Mammary epithelial cell (primary cell): ENCODE measurements at regions of chr11 and their contacts with region 1.

Region 1: DNA sequence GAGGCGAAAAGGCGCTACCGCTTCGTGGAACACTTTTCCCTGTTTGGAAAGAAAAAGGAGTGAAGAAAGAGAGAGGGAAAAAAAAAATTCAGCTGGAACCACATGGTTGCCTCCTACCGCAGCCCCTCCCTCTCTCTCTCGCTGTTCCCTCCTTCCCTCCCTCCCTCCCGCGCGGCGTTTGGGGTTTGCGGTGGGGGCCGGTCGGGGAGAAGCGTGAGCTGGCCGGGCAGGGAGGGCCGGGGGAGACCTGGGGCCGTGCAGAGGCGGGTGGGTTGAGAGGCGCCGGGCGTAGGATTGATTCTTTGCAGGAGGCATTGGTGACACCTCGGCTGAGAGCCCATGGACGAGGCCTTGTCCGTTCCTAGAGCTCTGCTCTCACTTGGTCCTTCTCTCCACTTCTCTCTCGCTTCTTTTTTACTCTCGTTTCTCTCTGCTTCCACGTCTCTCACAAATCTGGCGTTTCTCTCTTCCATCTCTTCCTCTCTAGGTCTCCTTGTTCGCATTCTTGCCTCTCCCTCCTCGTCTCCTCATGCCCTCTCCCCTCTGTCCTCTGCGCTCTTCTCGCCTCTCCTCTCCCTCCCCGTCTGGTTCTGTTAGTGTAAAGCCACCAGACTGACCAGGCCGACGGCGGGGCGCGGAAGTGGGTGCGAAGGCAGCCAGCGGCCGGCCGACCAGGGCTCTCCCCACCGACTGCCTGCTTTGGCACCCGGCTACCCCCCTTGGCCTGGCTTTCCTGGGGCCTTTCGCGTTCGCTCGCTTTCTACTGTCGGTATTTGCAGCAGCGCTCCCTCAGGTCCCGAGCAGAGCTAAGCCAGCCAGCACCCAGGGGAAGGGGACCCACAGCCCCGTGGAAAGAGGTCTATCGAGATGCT is at the start of gene CLMP:
- DNase-seq: peak; percentile 58
- H3K4me3 ChIP-seq: peak within 1 kb of the TSS; percentile 47 to 88 (median 87)
- H3K27ac ChIP-seq: peak within 1 kb of the TSS; percentile 77
- H3K4me1 ChIP-seq: peaks cover 52% of the 10 kb centered on the region
- H3K27me3 ChIP-seq: no peaks in the 10 kb centered on the region
- CTCF ChIP-seq: no peak
- total RNA-seq, gene CLMP: 110 to 175 TPM

Region 2: GRCh38 chr11:122808478-122808869 is 386.9 kb before region 1 on chr11:
- CTCF ChIA-PET with region 1: no interaction called
- dilution Hi-C with region 1: no loop called
- in situ Hi-C with region 1: no loop called
- intact Hi-C with region 1: loop called (anchors 10 kb)
- DNase-seq: peak; percentile 71
- H3K4me3 ChIP-seq: no peak overlapping the region
- H3K27ac ChIP-seq: peak overlapping the region; percentile 59
- H3K4me1 ChIP-seq: peaks cover 50% of the 10 kb centered on the region
- H3K27me3 ChIP-seq: no peaks in the 10 kb centered on the region
- CTCF ChIP-seq: no peak

Region 3: DNA sequence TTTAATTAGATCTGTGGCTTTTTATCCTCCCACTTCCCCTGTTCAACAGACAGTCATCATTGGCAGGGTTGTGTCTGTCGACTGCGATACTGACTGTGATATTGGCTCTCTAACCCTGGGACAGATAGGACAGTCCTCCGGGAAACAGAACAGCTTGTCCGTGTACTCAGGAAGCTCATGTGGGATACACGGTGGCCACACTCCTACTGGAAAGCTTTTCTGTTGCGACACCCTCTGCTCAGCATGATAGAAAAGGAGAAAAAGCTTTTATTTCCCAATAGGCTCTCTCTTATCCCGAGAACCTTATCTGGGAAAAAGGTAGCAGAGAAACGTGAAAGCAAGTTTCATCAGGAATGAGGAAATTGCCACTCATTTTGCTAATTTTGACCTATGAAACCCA is 73.1 kb before region 1 on chr11:
- CTCF ChIA-PET with region 1: no interaction called
- dilution Hi-C with region 1: no loop called
- in situ Hi-C with region 1: no loop called
- intact Hi-C with region 1: loop called (anchors 2 kb)
- DNase-seq: peak; percentile 43
- H3K4me3 ChIP-seq: no peak overlapping the region
- H3K27ac ChIP-seq: peak overlapping the region; percentile 56
- H3K4me1 ChIP-seq: peaks cover 22% of the 10 kb centered on the region
- H3K27me3 ChIP-seq: no peaks in the 10 kb centered on the region
- CTCF ChIP-seq: no peak

Region 4: DNA sequence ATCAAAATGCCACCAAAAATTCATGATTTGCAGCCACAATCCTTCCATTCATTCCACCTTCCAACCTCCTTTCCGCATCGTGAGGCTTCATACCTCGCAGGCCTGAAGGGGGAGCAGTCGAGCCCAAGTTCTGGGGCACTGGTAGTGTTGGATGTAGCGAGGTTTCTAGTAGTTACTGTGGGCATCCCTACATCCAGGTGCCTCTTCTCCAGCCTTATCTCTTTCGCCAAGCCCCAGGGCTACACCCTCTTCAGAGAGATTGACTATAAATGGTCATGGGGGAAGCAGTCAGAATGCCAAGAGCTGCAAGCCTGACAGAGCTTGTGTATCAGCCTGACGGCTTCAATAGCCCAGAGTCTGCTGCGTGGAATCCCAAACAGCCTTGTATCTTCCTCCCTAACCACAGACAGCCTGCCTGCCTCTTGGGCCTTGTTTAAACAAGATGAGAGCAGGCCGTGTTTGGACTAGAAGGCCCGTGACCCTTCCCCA is 29.3 kb before region 1 on chr11:
- CTCF ChIA-PET with region 1: interaction called, 3 read pairs
- dilution Hi-C with region 1: no loop called
- in situ Hi-C with region 1: no loop called
- intact Hi-C with region 1: loop called (anchors 1 kb)
- DNase-seq: peak; percentile 66
- H3K4me3 ChIP-seq: no peak overlapping the region
- H3K27ac ChIP-seq: peak overlapping the region; percentile 45
- H3K4me1 ChIP-seq: peaks cover 15% of the 10 kb centered on the region
- H3K27me3 ChIP-seq: no peaks in the 10 kb centered on the region
- CTCF ChIP-seq: peak; percentile 87 to 88

Region 5: GRCh38 chr11:123174196-123175183 is 20.9 kb before region 1 on chr11:
- CTCF ChIA-PET with region 1: no interaction called
- dilution Hi-C with region 1: no loop called
- in situ Hi-C with region 1: no loop called
- intact Hi-C with region 1: loop called (anchors 1 kb)
- DNase-seq: peak; percentile 77
- H3K4me3 ChIP-seq: no peak overlapping the region
- H3K27ac ChIP-seq: peak overlapping the region; percentile 71
- H3K4me1 ChIP-seq: peaks cover 32% of the 10 kb centered on the region
- H3K27me3 ChIP-seq: no peaks in the 10 kb centered on the region
- CTCF ChIP-seq: no peak

Region 6: GRCh38 chr11:123235117-123235655 is 39.8 kb after region 1 on chr11:
- CTCF ChIA-PET with region 1: no interaction called
- dilution Hi-C with region 1: no loop called
- in situ Hi-C with region 1: no loop called
- intact Hi-C with region 1: loop called (anchors 5 kb)
- DNase-seq: no peak
- H3K4me3 ChIP-seq: no peak overlapping the region
- H3K27ac ChIP-seq: no peak overlapping the region
- H3K4me1 ChIP-seq: peaks cover 6% of the 10 kb centered on the region
- H3K27me3 ChIP-seq: no peaks in the 10 kb centered on the region
- CTCF ChIP-seq: peak; percentile 50 to 52

Region 7: DNA sequence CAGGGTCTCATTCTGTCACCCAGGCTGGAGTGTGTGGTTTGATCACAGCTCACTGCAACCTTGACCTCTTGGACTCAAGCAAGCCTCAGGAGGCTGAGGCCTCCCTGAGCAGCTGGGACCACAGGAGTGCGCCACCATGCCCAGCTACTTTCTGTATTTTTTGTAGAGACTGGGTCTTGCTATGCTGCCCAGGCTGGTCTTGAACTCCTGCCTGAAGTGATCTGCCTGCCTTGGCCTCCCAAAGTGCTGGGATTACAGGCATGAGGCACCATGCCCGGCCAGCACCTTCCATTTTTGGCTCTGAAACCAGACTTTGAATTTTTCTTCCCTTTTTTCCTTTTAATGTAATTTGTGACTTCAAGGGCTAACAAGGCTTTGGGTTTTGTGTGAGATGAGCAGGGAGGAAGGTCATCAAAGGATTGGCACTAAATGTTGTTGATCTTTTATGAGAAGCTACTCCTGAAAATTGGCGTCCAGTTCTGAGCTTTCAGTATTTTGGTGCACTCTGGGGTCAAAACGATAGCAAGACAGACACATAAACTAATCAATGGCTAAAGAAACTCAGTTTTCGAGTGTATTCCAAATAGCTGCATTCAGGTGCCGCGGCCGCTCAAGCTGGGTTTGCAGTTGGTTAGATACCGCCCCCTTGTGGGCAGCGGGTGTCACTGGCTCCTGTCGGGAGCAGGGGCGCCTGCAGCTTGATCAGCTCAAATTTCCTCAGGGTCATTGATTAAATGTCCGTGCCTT is 51.5 kb after region 1 on chr11:
- CTCF ChIA-PET with region 1: no interaction called
- dilution Hi-C with region 1: no loop called
- in situ Hi-C with region 1: no loop called
- intact Hi-C with region 1: no loop called
- DNase-seq: peak; percentile 59
- H3K4me3 ChIP-seq: no peak overlapping the region
- H3K27ac ChIP-seq: no peak overlapping the region
- H3K4me1 ChIP-seq: peaks cover 3% of the 10 kb centered on the region
- H3K27me3 ChIP-seq: no peaks in the 10 kb centered on the region
- CTCF ChIP-seq: peak; percentile 92 to 99